H1 (cell line): ENCODE measurements at regions of chr6 and their contacts with region 1.

Region 1: GRCh38 chr6:111663692-111664564 is 58.2 kb upstream of the TRAF3IP2 start:
- DNase-seq: peak; percentile 44 to 82
- H3K4me3 ChIP-seq: peak overlapping the region in 2 of 4 experiments; percentile 7 to 32; a peak in 2 of 8 replicates
- H3K27ac ChIP-seq: no peak overlapping the region
- H3K4me1 ChIP-seq: peaks cover 13 to 33% (median 27%) of the 10 kb centered on the region in 4 experiments
- H3K27me3 ChIP-seq: no peaks in the 10 kb centered on the region
- CTCF ChIP-seq: no peak
- EP300 ChIP-seq: no peak
- POLR2A ChIP-seq: no peak
- RAD21 ChIP-seq: no peak

Region 2: DNA sequence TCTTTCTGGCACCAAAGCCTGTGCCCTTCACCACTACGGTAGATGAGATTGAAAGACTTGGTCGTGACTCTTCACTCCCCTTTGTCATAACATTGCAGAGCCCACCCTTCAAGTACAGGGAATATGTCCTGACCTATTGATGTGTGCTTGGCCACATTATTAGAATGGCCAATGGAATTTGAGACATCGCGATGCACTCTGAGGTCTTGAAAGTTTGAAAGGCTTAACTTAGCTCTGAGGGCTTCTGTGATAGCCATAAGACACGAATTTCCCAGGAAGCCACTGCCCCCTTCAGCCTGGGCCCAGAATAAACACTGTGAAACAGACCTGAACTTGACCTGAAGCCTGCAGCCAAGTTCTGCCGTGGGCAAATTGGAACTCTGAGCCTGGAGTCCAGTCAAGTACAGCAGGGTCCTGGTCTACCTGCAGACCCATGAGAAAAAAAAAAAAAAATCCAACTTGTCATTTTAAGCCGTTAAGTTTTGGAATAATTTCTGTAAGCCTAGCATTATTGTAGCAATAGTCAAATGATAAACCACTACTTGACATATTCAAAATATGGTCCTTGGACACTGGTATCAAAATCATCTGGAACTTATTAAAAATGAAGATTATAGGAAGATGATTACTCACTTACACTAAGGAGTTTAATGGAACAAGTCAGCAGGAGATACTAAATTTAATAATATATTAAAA is 21.3 kb before region 1 on chr6:
- CTCF ChIA-PET with region 1: interaction called, 12 read pairs
- POLR2A ChIA-PET with region 1: no interaction called
- DNase-seq: peak; percentile 59 to 69
- H3K4me3 ChIP-seq: no peak overlapping the region
- H3K27ac ChIP-seq: no peak overlapping the region
- H3K4me1 ChIP-seq: peaks cover 0 to 2% (median 0%) of the 10 kb centered on the region in 4 experiments; a peak in 1 of 7 replicates
- H3K27me3 ChIP-seq: no peaks in the 10 kb centered on the region
- CTCF ChIP-seq: peak; percentile 65 to 84 (median 74)
- EP300 ChIP-seq: no peak
- POLR2A ChIP-seq: no peak
- RAD21 ChIP-seq: peak; percentile 91

Region 3: DNA sequence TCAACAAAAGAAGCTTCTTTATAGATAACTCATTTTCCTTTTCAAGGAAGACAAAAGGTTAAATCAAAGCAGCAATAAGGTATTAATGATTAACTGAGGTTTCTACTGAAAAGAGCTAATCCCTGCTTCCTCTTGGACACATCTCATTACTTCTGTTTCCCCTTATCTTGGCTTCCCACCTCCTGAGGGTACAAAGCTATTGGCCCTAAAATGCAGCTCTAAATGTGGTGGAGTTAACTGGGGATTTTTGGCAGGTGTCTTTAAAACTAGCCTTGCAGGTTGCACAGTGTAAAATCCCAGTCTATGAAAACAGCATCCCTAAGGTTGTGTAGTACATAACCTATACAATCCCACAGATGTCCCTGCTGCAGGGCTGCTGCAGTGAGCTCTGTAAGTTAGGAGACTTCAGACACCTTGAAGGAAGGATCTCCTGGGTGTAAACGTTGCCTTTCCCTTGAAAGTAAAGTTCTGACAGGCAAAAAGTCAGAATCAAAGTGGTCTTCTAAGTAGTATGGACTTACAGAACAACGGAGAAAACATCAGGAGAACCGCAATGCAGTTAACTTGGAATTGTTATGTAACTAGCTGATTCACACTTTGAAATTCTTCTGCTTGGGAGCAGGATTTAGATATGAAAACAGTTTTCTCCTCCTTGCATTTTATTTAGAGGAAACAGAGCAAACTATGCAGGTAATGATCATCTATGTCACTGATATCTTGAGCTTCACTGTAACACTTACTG is 13.5 kb after region 1 on chr6:
- CTCF ChIA-PET with region 1: interaction called, 15 read pairs
- POLR2A ChIA-PET with region 1: interaction called, 5 read pairs
- DNase-seq: no peak
- H3K4me3 ChIP-seq: no peak overlapping the region
- H3K27ac ChIP-seq: no peak overlapping the region
- H3K4me1 ChIP-seq: peaks cover 0 to 11% (median 7%) of the 10 kb centered on the region in 4 experiments; a peak in 4 of 7 replicates
- H3K27me3 ChIP-seq: no peaks in the 10 kb centered on the region
- CTCF ChIP-seq: no peak
- EP300 ChIP-seq: no peak
- POLR2A ChIP-seq: no peak
- RAD21 ChIP-seq: no peak

Region 4: GRCh38 chr6:113352029-113352801 is 1688.3 kb after region 1 on chr6:
- CTCF ChIA-PET with region 1: no interaction called
- POLR2A ChIA-PET with region 1: no interaction called
- DNase-seq: no peak
- H3K4me3 ChIP-seq: no peak overlapping the region
- H3K27ac ChIP-seq: no peak overlapping the region
- H3K4me1 ChIP-seq: no peaks in the 10 kb centered on the region
- H3K27me3 ChIP-seq: no peaks in the 10 kb centered on the region
- CTCF ChIP-seq: no peak
- EP300 ChIP-seq: no peak
- POLR2A ChIP-seq: no peak
- RAD21 ChIP-seq: no peak